ENCODE measurements at regions of chr17 and their contacts with region 1.

Region 1: DNA sequence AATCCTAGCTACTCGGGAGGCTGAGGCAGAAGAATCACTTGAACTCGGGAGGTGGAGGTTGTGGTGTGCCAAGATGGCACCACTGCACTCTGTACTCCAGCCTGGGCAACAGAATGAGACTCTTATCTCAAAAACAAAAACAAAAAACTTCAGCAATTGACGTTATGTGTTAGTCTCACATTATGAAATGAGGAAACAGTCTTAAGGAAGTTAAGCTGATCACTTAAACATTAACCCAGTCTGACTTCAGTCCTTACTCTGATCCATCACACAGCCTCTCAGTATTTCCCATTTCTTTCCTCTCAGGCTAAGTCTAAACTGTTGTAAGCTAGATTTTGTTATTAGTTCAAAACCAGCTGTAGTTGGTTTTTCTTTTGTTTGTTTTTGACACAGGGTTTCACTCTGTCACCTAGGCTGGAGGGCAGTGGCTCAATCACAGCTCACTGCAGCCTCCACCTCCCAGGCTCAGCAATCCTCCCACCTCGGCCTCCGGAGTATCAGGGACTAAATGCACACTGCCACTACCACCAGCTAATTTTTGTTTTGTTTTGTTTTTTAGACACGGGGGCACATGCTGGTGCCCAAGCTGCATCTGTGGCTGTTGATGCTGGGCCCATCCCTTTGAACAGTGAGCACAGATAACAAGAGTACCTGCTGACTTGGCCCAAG is 6.3 kb downstream of the JPT1 start:
- DNase-seq: no peak
- H3K4me3 ChIP-seq: no peak overlapping the region
- H3K27ac ChIP-seq: no peak overlapping the region
- H3K4me1 ChIP-seq: no peaks in the 10 kb centered on the region
- H3K27me3 ChIP-seq: no peaks in the 10 kb centered on the region
- CTCF ChIP-seq: no peak

Region 2: DNA sequence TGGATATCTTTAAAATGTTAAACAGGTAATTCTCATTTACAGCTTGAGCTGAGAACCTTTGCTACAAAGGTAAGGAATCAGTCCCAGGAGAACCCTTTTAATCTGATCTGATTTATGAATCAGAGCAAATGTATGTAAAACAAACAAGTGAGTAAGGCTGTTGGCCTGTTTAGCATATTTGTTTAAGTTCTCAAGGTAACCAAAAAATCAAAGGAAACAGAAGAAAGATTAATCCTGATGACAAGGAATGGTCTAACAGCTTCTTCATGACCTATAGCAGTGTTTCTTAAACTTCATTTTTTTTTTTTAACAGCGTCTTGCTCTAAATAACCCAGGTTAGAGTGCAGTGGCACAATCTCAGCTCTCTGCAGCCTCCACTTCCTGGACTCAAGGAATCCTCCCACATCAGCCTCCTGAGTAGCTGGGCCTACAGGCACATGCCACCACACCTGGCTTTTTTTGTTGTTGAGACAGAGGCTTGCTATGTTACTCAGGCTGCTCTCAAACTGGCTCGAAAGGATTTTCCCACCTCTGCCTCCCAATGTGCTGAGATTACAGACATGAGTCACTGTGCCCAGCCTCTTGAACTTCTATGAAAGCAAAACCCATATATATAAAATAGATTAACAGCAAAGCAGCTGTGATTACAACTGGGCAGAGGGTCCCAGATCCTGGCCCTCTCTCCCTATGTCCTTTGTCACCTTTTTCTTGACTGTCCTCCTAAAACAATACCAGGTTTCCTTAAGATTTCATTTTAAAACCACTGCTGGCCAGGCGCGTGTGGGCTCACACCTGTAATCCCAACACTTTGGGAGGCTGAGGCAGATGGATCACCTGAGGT is 11.4 kb after region 1 on chr17:
- CTCF ChIA-PET with region 1: interaction called, 12 read pairs
- POLR2A ChIA-PET with region 1: no interaction called
- intact Hi-C with region 1: no loop called
- DNase-seq: no peak
- H3K4me3 ChIP-seq: no peak overlapping the region
- H3K27ac ChIP-seq: no peak overlapping the region
- H3K4me1 ChIP-seq: peaks cover 4% of the 10 kb centered on the region
- H3K27me3 ChIP-seq: no peaks in the 10 kb centered on the region
- CTCF ChIP-seq: no peak

Region 3: GRCh38 chr17:75277664-75278071 is 129.7 kb after region 1 on chr17:
- CTCF ChIA-PET with region 1: no interaction called
- POLR2A ChIA-PET with region 1: interaction called, 15 read pairs
- intact Hi-C with region 1: no loop called
- DNase-seq: no peak
- H3K4me3 ChIP-seq: no peak overlapping the region
- H3K27ac ChIP-seq: no peak overlapping the region
- H3K4me1 ChIP-seq: no peaks in the 10 kb centered on the region
- H3K27me3 ChIP-seq: no peaks in the 10 kb centered on the region
- CTCF ChIP-seq: no peak

Region 4: GRCh38 chr17:75393523-75394331 is 245.7 kb after region 1 on chr17:
- CTCF ChIA-PET with region 1: no interaction called
- POLR2A ChIA-PET with region 1: no interaction called
- intact Hi-C with region 1: no loop called
- DNase-seq: peak; percentile 99
- H3K4me3 ChIP-seq: peak overlapping the region; percentile 52
- H3K27ac ChIP-seq: peak overlapping the region; percentile 58
- H3K4me1 ChIP-seq: peaks cover 17% of the 10 kb centered on the region
- H3K27me3 ChIP-seq: no peaks in the 10 kb centered on the region
- CTCF ChIP-seq: no peak

Measured in A673 (cell line).